ENCODE measurements at regions of chr10 and their contacts with region 1.

Region 1: GRCh38 chr10:121804460-121804859 is 123.4 kb downstream of the ATE1 start:
- DNase-seq: no peak
- ATAC-seq: no peak
- H3K4me3 Mint-ChIP-seq: no peak overlapping the region
- H3K27ac Mint-ChIP-seq: no peak overlapping the region
- H3K4me1 Mint-ChIP-seq: no peaks in the 10 kb centered on the region
- H3K27me3 Mint-ChIP-seq: no peaks in the 10 kb centered on the region

Region 2: GRCh38 chr10:121702351-121703320 is 101.8 kb before region 1 on chr10:
- CTCF ChIA-PET with region 1: no interaction called
- POLR2A ChIA-PET with region 1: no interaction called
- intact Hi-C with region 1: no loop called
- DNase-seq: no peak
- ATAC-seq: no peak
- H3K4me3 Mint-ChIP-seq: no peak overlapping the region
- H3K27ac Mint-ChIP-seq: no peak overlapping the region
- H3K4me1 Mint-ChIP-seq: no peaks in the 10 kb centered on the region
- H3K27me3 Mint-ChIP-seq: peaks cover 10% of the 10 kb centered on the region

Region 3: DNA sequence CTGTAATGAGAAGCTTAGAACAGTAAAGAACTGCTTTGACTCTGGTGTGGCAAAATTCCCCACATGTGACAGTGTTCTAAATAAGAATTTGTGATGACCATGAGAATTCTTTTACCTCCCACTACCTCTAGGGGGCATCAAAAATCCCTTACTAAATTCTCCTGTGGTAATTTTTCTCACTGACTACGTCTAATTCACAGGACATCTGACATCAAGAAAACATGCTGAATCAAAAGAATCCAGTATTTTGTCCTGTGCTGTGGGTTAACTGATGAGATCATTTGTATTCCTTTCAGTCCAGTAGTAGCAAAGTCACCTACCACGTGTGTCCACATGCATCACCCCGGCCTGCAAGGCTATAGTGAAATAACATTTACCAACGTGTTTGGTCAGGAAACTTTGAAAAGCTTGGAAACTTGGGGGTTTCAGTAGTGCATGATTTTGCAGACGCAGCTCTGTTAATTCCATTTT is 19.6 kb after region 1 on chr10:
- CTCF ChIA-PET with region 1: interaction called, 11 read pairs
- POLR2A ChIA-PET with region 1: no interaction called
- intact Hi-C with region 1: no loop called
- DNase-seq: no peak
- ATAC-seq: peak; percentile 46
- H3K4me3 Mint-ChIP-seq: no peak overlapping the region
- H3K27ac Mint-ChIP-seq: no peak overlapping the region
- H3K4me1 Mint-ChIP-seq: peaks cover 4% of the 10 kb centered on the region
- H3K27me3 Mint-ChIP-seq: no peaks in the 10 kb centered on the region